ENCODE measurements at regions of chr19 and their contacts with region 1.

Region 1: GRCh38 chr19:43743022-43743421 is 11.7 kb downstream of the SMG9 start:
- DNase-seq: no peak

Region 2: DNA sequence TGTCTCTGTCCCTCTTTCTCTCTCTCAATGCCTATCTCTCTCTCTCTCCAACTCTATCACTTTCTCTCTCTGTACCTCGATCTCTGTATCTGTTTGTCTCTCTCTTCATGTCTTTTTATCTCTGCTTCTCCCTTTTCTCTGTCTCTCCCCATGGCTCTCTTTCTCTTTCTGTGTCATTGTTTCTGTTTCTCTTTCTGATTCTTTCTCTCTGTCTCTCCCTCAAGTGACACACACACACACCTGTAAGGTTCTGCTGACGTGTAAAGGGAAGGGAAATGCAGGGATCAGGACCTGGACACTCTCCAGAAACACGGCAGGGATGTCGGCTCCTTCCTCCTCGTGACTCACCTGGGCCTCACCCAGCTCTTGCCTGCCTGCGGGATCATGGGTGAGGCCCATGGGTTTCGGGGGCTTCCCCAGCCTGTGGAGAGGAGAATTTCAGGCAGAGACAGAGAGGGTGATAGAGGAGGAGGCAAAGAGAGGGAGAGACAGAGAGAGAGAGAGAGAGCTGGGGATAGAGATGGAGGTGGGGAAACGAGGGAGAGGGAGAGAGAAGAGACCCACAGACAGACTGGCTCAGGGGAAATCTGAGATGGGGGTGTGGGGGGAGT is 67.6 kb before region 1 on chr19:
- intact Hi-C with region 1: loop called (anchors 10 kb)
- DNase-seq: peak in 2 of 42 donors; percentile 20 to 41

Region 3: GRCh38 chr19:43784981-43785808 is 42.2 kb after region 1 on chr19:
- intact Hi-C with region 1: loop called (anchors 5 kb)
- DNase-seq: peak in 36 of 42 donors; percentile 20 to 76 (median 52)

Measured in head of caudate nucleus (tissue), 42 donors.